ENCODE measurements at regions of chr17 and their contacts with region 1.

Region 1: GRCh38 chr17:79497777-79498348 is 113.0 kb downstream of the RBFOX3 start:
- DNase-seq: no peak

Region 2: GRCh38 chr17:78708510-78708973 is 789.3 kb before region 1 on chr17:
- intact Hi-C with region 1: no loop called
- DNase-seq: peak; percentile 91

Region 3: GRCh38 chr17:78789663-78790181 is 708.1 kb before region 1 on chr17:
- intact Hi-C with region 1: loop called in 1 of 2 experiments (anchors 5 kb)
- DNase-seq: peak; percentile 89

Region 4: GRCh38 chr17:79437856-79438457 is 59.9 kb before region 1 on chr17:
- intact Hi-C with region 1: no loop called
- DNase-seq: no peak

Region 5: GRCh38 chr17:79459003-79459655 is 38.7 kb before region 1 on chr17:
- intact Hi-C with region 1: no loop called
- DNase-seq: no peak